Posterior cingulate gyrus (tissue), 11 donors: ENCODE measurements at regions of chr14 and their contacts with region 1.

Region 1: DNA sequence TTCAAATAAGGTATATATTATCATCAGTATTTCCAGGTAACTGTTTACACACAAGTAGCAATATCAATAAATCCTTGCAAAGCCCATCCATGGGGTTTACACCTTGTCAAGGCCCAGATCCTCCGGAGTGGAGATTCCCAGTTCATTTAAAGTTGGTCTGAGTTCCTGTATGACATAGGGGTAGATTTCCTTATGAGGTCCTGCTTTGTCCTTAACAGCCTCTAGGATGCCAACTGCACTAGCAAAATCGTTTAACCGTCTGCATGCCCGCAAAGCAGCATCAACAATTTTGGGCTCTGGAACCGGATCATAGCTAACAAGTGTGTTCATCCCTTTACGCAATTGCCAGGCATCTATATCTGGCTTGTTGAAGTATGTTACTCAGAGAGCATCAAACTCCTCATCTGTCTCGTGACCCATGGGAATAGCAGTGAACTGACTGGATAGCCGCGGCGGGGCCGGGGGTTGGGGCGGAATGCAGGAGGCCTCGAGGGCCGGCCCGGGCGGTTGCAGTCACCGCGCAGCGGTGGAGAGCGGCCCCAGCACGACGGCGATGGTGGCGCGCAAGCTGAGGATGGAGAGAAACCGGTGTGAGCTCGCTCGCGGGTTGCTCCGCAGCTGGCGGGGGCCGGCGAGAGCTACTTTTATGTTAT is 30.6 kb upstream of the FBXO34 start:
- DNase-seq: peak in 5 of 10 donors; percentile 6 to 90 (median 19)

Region 2: GRCh38 chr14:55221186-55221585 is 19.5 kb before region 1 on chr14:
- intact Hi-C with region 1: loop called (anchors 1 kb)
- DNase-seq: no peak